ENCODE measurements at regions of chr1 and their contacts with region 1.

Region 1: DNA sequence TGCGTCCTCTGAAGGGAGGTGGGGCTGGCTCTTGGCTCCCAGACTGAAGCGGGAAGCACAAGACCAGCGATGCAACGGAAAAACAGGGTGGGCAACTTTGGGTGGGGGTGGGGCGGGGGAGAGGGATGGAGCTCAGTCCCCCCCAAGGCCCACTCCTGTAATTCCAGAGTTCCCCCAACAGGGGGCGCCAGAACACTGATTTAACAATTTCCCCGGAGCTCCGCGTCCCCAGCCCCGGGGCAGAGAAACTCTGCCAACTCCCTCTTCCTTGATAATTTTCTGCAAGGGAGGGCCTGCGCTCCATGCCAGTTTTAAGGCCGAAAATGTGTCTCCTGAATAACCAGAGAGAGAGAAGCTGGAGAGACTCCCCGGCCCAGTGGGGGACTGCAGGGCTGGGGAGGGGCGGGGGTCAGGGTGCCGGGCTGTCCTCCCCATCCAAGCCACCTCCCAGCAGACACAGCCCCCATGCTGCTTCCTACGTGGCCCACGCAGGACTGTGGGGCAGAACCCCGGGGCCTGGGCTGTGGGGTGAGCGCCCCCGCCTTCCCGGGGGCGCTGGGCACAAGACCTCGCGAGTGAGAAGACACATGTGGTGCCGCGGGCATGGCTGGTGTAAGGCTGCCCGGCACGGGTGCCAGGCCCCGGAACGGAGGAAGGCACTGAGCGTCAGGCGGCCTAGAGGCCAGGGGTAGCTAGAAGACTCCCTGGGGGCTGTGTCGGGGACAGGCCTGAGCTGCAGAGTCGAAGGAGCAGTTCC is 51.4 kb downstream of the KIF21B start:
- DNase-seq: peak; percentile 69
- ATAC-seq: peak; percentile 49
- H3K4me3 ChIP-seq: no peak overlapping the region
- H3K4me3 Mint-ChIP-seq: no peak overlapping the region
- H3K27ac ChIP-seq: no peak overlapping the region
- H3K27ac Mint-ChIP-seq: no peak overlapping the region
- H3K4me1 ChIP-seq: no peaks in the 10 kb centered on the region
- H3K4me1 Mint-ChIP-seq: peaks cover 11% of the 10 kb centered on the region
- H3K27me3 ChIP-seq: no peaks in the 10 kb centered on the region
- H3K27me3 Mint-ChIP-seq: no peaks in the 10 kb centered on the region
- CTCF ChIP-seq: peak; percentile 99

Region 2: DNA sequence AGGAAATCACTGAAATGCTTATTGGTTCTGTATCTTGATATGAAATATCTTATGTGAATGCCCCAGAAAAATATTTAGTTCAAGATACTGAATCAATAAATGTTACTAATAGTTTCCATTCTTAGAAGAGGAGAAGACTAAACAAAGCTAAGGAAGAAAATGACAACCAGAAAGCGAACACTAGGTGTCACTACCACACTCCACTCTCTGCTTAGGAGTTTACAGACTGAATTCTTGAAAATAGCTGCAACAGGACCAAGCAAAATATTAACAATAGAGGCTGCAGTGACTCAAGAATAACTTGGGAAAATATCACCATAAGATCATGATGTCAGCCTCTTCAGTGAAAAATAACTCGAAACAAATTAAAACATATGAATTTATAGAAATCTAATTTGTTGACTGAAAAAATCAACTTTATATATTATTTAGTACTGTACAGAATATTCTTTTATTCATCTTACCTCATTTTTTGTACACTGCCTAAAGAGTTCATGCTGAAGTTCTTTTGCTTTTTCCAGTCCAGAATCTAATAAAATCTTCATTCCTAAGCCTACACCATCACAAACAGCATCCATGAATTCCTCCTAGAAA is 413.2 kb before region 1 on chr1:
- CTCF ChIA-PET with region 1: interaction called, 11 read pairs
- POLR2A ChIA-PET with region 1: no interaction called
- intact Hi-C with region 1: no loop called
- DNase-seq: peak; percentile 51
- ATAC-seq: no peak
- H3K4me3 ChIP-seq: no peak overlapping the region
- H3K4me3 Mint-ChIP-seq: no peak overlapping the region
- H3K27ac ChIP-seq: no peak overlapping the region
- H3K27ac Mint-ChIP-seq: no peak overlapping the region
- H3K4me1 ChIP-seq: no peaks in the 10 kb centered on the region
- H3K4me1 Mint-ChIP-seq: peaks cover 1% of the 10 kb centered on the region
- H3K27me3 ChIP-seq: no peaks in the 10 kb centered on the region
- H3K27me3 Mint-ChIP-seq: no peaks in the 10 kb centered on the region
- CTCF ChIP-seq: peak; percentile 75

Region 3: DNA sequence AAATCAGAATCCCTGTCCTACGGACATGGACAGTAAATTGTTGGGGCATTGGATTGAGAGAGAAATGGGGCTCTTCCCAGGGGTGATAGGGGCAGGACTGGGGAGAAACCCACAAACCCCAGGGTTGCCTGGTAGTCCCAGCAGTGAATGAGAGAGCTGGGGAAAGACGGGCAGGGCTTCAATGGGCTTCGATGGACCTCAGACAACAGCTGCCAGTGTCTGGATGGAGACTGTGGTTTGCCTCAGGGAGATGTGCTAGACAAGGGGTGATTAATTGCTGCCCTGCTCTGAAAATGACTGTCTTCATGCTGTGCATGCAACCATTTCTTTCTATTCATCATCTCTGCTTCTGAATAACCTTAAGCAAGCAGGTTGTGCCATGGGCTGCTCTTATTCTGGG is 91.9 kb before region 1 on chr1:
- CTCF ChIA-PET with region 1: no interaction called
- POLR2A ChIA-PET with region 1: no interaction called
- intact Hi-C with region 1: no loop called
- DNase-seq: no peak
- ATAC-seq: no peak
- H3K4me3 ChIP-seq: no peak overlapping the region
- H3K4me3 Mint-ChIP-seq: no peak overlapping the region
- H3K27ac ChIP-seq: no peak overlapping the region
- H3K27ac Mint-ChIP-seq: no peak overlapping the region
- H3K4me1 ChIP-seq: no peaks in the 10 kb centered on the region
- H3K4me1 Mint-ChIP-seq: peaks cover 9% of the 10 kb centered on the region
- H3K27me3 ChIP-seq: peaks cover 0 to 10% (median 0%) of the 10 kb centered on the region in 4 experiments
- H3K27me3 Mint-ChIP-seq: peaks cover 4% of the 10 kb centered on the region
- CTCF ChIP-seq: no peak

Region 4: GRCh38 chr1:200925831-200926230 is 46.3 kb before region 1 on chr1:
- CTCF ChIA-PET with region 1: no interaction called
- POLR2A ChIA-PET with region 1: no interaction called
- intact Hi-C with region 1: no loop called
- DNase-seq: no peak
- ATAC-seq: no peak
- H3K4me3 ChIP-seq: no peak overlapping the region
- H3K4me3 Mint-ChIP-seq: no peak overlapping the region
- H3K27ac ChIP-seq: no peak overlapping the region
- H3K27ac Mint-ChIP-seq: no peak overlapping the region
- H3K4me1 ChIP-seq: no peaks in the 10 kb centered on the region
- H3K4me1 Mint-ChIP-seq: no peaks in the 10 kb centered on the region
- H3K27me3 ChIP-seq: no peaks in the 10 kb centered on the region
- H3K27me3 Mint-ChIP-seq: peaks cover 3% of the 10 kb centered on the region
- CTCF ChIP-seq: no peak

Region 5: GRCh38 chr1:201036188-201036842 is 64.2 kb after region 1 on chr1:
- CTCF ChIA-PET with region 1: interaction called, 303 read pairs
- POLR2A ChIA-PET with region 1: no interaction called
- intact Hi-C with region 1: no loop called
- DNase-seq: no peak
- ATAC-seq: no peak
- H3K4me3 ChIP-seq: no peak overlapping the region
- H3K4me3 Mint-ChIP-seq: no peak overlapping the region
- H3K27ac ChIP-seq: no peak overlapping the region
- H3K27ac Mint-ChIP-seq: no peak overlapping the region
- H3K4me1 ChIP-seq: no peaks in the 10 kb centered on the region
- H3K4me1 Mint-ChIP-seq: no peaks in the 10 kb centered on the region
- H3K27me3 ChIP-seq: no peaks in the 10 kb centered on the region
- H3K27me3 Mint-ChIP-seq: no peaks in the 10 kb centered on the region
- CTCF ChIP-seq: no peak

Region 6: GRCh38 chr1:201114236-201115131 is 142.4 kb after region 1 on chr1:
- CTCF ChIA-PET with region 1: interaction called, 46 read pairs
- POLR2A ChIA-PET with region 1: no interaction called
- intact Hi-C with region 1: no loop called
- DNase-seq: peak; percentile 78
- ATAC-seq: peak; percentile 88
- H3K4me3 ChIP-seq: peak overlapping the region; percentile 31 to 77 (median 58)
- H3K4me3 Mint-ChIP-seq: peak overlapping the region; percentile 87
- H3K27ac ChIP-seq: no peak overlapping the region
- H3K27ac Mint-ChIP-seq: no peak overlapping the region
- H3K4me1 ChIP-seq: peaks cover 4 to 13% of the 10 kb centered on the region in 2 donors
- H3K4me1 Mint-ChIP-seq: peaks cover 4% of the 10 kb centered on the region
- H3K27me3 ChIP-seq: peaks cover 0 to 32% (median 14%) of the 10 kb centered on the region in 4 experiments
- H3K27me3 Mint-ChIP-seq: peaks cover 29% of the 10 kb centered on the region
- CTCF ChIP-seq: peak; percentile 75

Region 7: DNA sequence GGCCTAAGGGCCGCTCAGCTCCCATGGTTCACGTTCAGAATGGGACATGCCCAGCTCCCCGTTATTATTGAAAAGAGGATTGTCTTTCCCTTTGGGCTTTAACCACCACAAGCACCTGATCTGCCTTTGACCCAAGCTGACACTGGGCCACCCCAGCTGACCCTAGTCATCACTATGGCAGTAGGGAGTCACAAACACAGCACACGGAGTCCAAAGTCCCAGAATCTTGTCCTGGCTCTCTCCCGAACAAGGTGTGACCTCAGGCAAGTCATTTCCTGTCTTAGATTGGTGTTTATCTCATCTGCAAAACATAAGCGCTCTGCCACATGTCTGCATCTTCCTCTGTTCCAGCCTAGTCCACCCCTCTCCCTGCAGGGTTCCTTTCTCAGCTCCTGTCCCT is 250.0 kb after region 1 on chr1:
- CTCF ChIA-PET with region 1: no interaction called
- POLR2A ChIA-PET with region 1: no interaction called
- intact Hi-C with region 1: loop called (anchors 2 kb)
- DNase-seq: no peak
- ATAC-seq: no peak
- H3K4me3 ChIP-seq: no peak overlapping the region
- H3K4me3 Mint-ChIP-seq: no peak overlapping the region
- H3K27ac ChIP-seq: no peak overlapping the region
- H3K27ac Mint-ChIP-seq: no peak overlapping the region
- H3K4me1 ChIP-seq: no peaks in the 10 kb centered on the region
- H3K4me1 Mint-ChIP-seq: no peaks in the 10 kb centered on the region
- H3K27me3 ChIP-seq: no peaks in the 10 kb centered on the region
- H3K27me3 Mint-ChIP-seq: peaks cover 9% of the 10 kb centered on the region
- CTCF ChIP-seq: no peak

Measured in B cell (primary cell).